ENCODE measurements at regions of chr11 and their contacts with region 1.

Region 1: GRCh38 chr11:73787643-73788537 is at the start of gene MRPL48:
- DNase-seq: peak; percentile 92 to 94
- H3K4me3 ChIP-seq: peak within 1 kb of the TSS; percentile 14 to 50 (median 38)
- H3K27ac ChIP-seq: peak within 1 kb of the TSS; percentile 82 to 95 (median 88)
- H3K4me1 ChIP-seq: peaks cover 4 to 15% of the 10 kb centered on the region in 2 donors
- H3K27me3 ChIP-seq: no peaks in the 10 kb centered on the region
- CTCF ChIP-seq: peak in 1 of 6 experiments; percentile 19
- POLR2A ChIP-seq: peak in 1 of 2 donors; percentile 46
- total RNA-seq, gene MRPL48: 16.0 to 38.5 (median 29.8) TPM

Region 2: DNA sequence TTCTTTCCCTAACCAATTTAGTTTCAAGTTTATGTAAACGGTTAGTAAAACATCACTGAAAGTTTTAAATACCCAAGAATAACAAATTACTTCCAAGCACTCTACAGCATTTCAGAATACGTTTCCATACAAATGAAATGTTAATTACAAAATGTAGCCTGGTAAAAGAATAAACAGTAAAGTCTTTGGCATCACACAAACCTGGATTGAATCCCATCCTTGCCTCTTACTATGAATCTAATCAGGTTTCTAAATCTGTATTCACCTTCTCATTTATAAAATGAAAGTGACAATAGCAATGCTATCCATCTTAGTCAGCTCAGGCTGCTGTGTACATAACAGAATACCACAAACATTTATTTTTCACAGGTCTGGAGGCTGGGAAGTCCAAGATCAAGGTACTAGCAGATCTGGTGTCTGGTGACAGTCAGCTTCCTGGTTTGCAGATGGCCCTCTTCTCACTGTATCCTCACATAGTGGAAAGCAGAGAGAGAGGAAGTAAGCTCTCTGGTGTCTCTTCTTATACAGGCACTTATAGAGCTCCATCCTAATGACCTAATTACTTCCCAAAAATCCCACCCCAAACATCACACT is 209.2 kb before region 1 on chr11:
- intact Hi-C with region 1: no loop called
- DNase-seq: no peak
- H3K4me3 ChIP-seq: no peak overlapping the region
- H3K27ac ChIP-seq: no peak overlapping the region
- H3K4me1 ChIP-seq: peaks cover 0 to 3% of the 10 kb centered on the region in 2 donors
- H3K27me3 ChIP-seq: no peaks in the 10 kb centered on the region
- CTCF ChIP-seq: no peak
- POLR2A ChIP-seq: no peak

Region 3: DNA sequence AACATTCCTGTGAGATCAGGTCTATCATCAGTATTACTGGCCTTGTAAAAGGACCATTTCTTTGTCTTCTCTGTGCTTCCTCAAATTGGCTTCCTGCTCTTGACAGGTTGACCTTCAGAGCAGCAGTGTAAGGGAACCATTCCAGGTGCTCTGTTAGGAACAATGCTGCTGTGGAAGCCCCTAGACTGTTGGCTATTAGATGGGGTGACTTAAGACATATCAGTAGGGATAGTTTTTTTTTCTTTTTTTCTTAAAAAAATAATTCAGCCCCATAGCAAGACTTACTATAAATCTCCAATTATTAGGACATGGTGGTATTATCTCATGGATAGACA is 51.2 kb after region 1 on chr11:
- intact Hi-C with region 1: no loop called
- DNase-seq: no peak
- H3K4me3 ChIP-seq: no peak overlapping the region
- H3K27ac ChIP-seq: no peak overlapping the region
- H3K4me1 ChIP-seq: no peaks in the 10 kb centered on the region
- H3K27me3 ChIP-seq: no peaks in the 10 kb centered on the region
- CTCF ChIP-seq: no peak
- POLR2A ChIP-seq: no peak

Region 4: DNA sequence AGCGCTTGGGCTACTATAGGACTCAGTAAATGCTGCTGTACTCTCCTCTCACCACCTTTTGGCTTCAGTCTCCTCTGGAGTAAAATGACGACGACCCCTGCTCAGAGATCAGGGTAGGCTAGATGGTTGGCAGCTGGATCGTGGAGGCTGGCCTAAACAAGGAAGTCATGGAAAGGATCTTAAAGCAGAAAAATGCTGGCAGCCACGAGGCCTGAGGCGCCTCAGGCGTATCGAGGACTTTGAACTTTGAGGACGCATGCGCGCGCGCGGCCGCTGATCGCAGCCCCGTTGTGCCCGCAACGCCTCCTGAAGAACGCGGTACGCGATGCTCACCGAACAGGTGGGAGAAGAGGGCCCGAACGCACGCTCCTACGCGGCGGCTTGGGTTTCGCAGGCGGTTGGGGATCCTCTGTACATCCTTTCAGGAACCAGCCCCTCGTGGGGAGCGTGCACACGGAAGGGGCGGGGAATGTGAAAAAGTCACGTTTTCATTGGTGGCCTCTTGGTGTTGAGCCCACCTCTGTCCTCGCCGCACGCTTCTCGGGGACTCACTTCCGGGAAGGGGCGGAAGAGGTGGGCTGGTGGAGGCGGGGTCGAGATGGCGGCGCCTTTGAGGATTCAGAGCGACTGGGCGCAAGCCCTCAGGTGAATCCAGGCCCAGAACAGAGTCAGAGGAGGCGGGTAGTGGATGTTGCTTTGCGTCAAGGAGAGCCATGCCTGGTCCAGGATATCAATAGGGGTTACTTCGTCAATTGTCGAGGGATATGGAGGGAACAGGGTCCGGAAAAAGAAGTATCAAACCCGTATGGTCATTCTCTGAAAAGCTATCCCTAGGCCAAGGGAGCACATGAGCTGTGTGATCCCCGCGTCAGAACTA is 88.8 kb after region 1 on chr11 and contains the starts of genes COA4 and PAAF1:
- intact Hi-C with region 1: loop called (anchors 5 kb)
- DNase-seq: peak; percentile 94
- H3K4me3 ChIP-seq: peak within 1 kb of the TSS; percentile 62 to 72 (median 71)
- H3K27ac ChIP-seq: peak within 1 kb of the TSS; percentile 49 to 74 (median 55)
- H3K4me1 ChIP-seq: peaks cover 12 to 14% of the 10 kb centered on the region in 2 donors
- H3K27me3 ChIP-seq: no peaks in the 10 kb centered on the region
- CTCF ChIP-seq: no peak
- POLR2A ChIP-seq: peak in 1 of 2 donors; percentile 79
- total RNA-seq, gene COA4: 62.9 to 117 (median 103) TPM
- total RNA-seq, gene PAAF1: 10.0 to 23.3 (median 15.9) TPM

Region 5: DNA sequence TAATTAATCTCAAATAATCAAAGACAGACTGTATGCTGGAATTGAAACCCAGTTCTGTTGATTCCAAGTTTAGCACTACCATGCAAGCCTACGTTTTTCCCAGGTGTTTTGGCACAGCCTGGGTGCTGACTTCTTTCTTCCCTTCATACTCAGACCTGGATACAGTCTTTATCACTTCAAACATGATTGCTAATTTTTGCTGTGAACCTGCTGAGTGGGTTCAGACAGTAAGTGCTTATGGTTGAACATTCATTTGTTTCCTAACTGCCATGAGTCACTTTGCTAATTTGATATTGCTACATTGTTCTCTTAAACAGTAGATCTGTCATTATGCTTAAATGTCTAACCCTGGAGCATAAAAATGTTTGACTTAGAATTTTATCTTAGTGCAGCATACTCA is 101.1 kb after region 1 on chr11:
- intact Hi-C with region 1: no loop called
- DNase-seq: no peak
- H3K4me3 ChIP-seq: no peak overlapping the region
- H3K27ac ChIP-seq: no peak overlapping the region
- H3K4me1 ChIP-seq: no peaks in the 10 kb centered on the region
- H3K27me3 ChIP-seq: no peaks in the 10 kb centered on the region
- CTCF ChIP-seq: no peak
- POLR2A ChIP-seq: no peak

Region 6: GRCh38 chr11:74141241-74141729 is 353.4 kb after region 1 on chr11:
- intact Hi-C with region 1: no loop called
- DNase-seq: peak; percentile 16 to 31
- H3K4me3 ChIP-seq: no peak overlapping the region
- H3K27ac ChIP-seq: peak overlapping the region in 1 of 3 donors; percentile 11
- H3K4me1 ChIP-seq: peaks cover 5 to 30% of the 10 kb centered on the region in 2 donors
- H3K27me3 ChIP-seq: no peaks in the 10 kb centered on the region
- CTCF ChIP-seq: no peak
- POLR2A ChIP-seq: no peak